Heart left ventricle (tissue), 16 donors: ENCODE measurements at regions of chr3 and their contacts with region 1.

Region 1: GRCh38 chr3:180989291-180990163 is at the start of gene DNAJC19:
- DNase-seq: peak; percentile 91 to 95 (median 93)
- ATAC-seq: peak; percentile 98 to 99 (median 99)
- H3K4me3 ChIP-seq: peak within 1 kb of the TSS; percentile 38 to 94 (median 82)
- H3K27ac ChIP-seq: peak within 1 kb of the TSS; percentile 66 to 92 (median 84)
- H3K4me1 ChIP-seq: peaks cover 0 to 29% (median 17%) of the 10 kb centered on the region in 12 donors
- H3K27me3 ChIP-seq: no peaks in the 10 kb centered on the region
- CTCF ChIP-seq: no peak
- POLR2A ChIP-seq: peak in 1 of 2 donors; percentile 79
- total RNA-seq, gene DNAJC19: 51.7 to 122 (median 85.6) TPM

Region 2: DNA sequence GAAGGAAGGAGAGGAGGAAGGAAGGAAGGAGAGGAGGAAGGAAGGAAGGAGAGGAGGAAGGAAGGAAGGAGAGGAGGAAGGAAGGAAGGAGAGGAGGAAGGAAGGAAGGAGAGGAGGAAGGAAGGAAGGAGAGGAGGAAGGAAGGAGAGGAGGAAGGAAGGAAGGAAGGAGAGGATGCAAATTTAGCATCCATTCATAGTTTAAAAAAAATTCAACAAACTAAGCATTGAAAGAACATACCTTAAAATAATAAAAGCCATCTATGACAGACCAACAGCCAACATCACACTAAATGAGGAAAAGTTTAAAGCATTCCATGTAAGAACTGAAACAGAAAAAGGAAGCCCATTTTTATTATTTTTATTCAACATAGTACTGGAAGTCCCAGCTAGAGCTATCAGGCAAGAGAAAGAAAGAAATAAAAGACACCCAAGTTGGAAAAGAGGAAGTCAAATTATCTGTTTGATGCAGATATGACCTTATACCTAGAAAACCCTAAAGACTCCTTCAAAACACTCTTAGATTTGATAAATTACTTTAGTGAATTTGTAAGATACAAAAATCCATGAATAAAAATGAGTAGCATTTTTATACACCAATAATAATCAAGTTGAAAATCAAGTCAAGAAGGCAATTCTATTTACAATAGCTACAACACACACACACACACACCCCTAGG is 129.2 kb before region 1 on chr3:
- intact Hi-C with region 1: no loop called
- DNase-seq: no peak
- ATAC-seq: no peak
- H3K4me3 ChIP-seq: no peak overlapping the region
- H3K27ac ChIP-seq: no peak overlapping the region
- H3K4me1 ChIP-seq: no peaks in the 10 kb centered on the region
- H3K27me3 ChIP-seq: no peaks in the 10 kb centered on the region
- CTCF ChIP-seq: no peak
- POLR2A ChIP-seq: no peak

Region 3: GRCh38 chr3:181176601-181177000 is 187.1 kb after region 1 on chr3:
- intact Hi-C with region 1: loop called in 1 of 10 experiments (anchors 10 kb)
- DNase-seq: peak in 4 of 5 donors; percentile 36 to 63 (median 39)
- ATAC-seq: no peak
- H3K4me3 ChIP-seq: no peak overlapping the region
- H3K27ac ChIP-seq: no peak overlapping the region
- H3K4me1 ChIP-seq: peaks cover 0 to 4% (median 0%) of the 10 kb centered on the region in 12 donors
- H3K27me3 ChIP-seq: no peaks in the 10 kb centered on the region
- CTCF ChIP-seq: peak; percentile 40 to 69 (median 54)
- POLR2A ChIP-seq: no peak

Region 4: GRCh38 chr3:181683563-181683962 is 694.0 kb after region 1 on chr3:
- intact Hi-C with region 1: no loop called
- DNase-seq: no peak
- ATAC-seq: no peak
- H3K4me3 ChIP-seq: no peak overlapping the region
- H3K27ac ChIP-seq: no peak overlapping the region
- H3K4me1 ChIP-seq: no peaks in the 10 kb centered on the region
- H3K27me3 ChIP-seq: peaks cover 0 to 10% (median 0%) of the 10 kb centered on the region in 9 donors
- CTCF ChIP-seq: no peak
- POLR2A ChIP-seq: no peak